ENCODE measurements at regions of chr6 and their contacts with region 1.

Region 1: DNA sequence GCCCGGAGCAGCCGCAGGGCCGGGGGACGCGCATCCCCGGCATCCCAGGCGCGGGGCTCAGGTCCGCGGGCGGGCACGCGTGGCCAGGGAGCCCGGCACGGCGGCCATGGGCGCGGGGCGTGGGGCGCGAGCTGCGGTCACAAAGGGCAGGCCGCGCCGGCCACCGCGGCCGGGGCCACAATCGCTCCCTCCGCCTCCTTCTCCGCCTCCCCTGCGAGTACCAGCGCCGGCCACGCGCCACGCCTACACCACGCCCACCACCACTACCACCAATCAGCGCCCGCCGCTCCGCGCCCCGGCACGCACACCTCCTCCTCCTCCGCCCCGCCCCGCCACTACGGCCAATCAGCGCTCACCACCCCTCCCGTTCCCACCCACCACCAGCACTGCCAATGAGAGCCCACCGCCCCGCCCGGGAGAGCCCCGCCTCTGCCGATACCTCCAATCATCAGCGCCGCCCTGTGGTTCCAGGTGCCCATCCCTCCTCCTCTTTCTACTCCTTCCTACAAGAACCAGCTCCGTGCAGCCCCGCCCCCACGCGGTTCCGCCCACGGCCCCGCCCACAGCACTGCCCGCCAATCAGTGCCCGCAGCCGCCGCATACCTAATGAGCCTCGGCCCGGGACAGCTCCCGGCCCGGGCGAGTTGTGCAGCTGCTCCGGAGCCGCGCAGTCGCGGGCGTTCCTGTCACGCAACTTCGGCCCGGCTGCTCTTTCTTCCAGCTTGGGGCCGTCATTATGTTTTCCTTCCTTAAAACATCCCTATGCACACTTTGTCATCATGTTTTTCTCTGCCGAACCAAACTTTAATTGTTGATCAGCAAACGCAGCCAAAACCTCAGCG is at the start of gene RPS6KA2:
- DNase-seq: peak; percentile 100
- H3K4me3 Mint-ChIP-seq: peak within 1 kb of the TSS; percentile 81
- H3K27ac Mint-ChIP-seq: peak within 1 kb of the TSS; percentile 59
- H3K4me1 Mint-ChIP-seq: peaks cover 23% of the 10 kb centered on the region
- H3K27me3 Mint-ChIP-seq: peaks cover 57% of the 10 kb centered on the region
- total RNA-seq, gene RPS6KA2: 2.1 and 2.2 TPM in 2 replicates

Region 2: DNA sequence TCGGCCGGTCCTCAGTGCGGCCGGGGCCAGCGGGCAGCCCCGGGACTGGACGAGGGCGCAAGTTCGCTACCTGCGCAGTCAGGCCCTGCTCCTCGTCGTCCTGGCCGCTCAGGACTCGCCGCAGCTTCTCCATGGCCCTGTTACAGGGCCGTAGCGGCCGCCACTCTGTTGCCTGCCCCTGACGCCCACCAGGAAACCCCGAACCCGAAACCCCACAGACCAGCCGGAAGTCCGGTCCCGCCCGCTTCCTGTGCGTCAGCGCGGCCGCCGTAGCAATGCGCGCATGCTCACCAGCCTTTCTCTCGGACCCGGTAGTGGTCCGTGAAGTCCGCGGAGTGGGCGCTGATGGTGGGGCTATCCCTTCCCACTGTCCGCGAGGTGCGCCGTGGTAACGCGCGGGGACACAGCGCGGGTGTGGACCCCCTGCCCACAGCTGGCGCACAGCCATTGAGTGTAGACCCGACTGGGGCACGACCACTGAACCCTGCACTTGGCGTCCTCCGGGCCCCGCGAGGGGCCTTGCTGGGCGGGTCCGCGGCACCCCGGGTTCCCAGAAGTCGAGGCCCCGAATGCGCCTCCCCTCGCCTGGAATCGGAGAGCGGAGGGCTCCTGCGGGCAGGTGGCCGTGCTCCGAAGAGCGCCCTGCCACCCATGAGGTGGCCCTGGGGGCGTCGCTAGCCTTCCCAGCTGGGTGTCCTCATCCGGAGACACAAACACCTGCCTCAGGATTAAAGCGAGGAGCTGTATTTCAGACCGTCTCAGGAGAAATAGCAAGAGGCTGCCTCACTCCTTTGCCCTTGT is 284.7 kb before region 1 on chr6 and contains the start of gene SFT2D1:
- intact Hi-C with region 1: loop called (anchors 5 kb)
- DNase-seq: peak; percentile 81
- H3K4me3 Mint-ChIP-seq: peak within 1 kb of the TSS; percentile 89
- H3K27ac Mint-ChIP-seq: peak within 1 kb of the TSS; percentile 86
- H3K4me1 Mint-ChIP-seq: peaks cover 4% of the 10 kb centered on the region
- H3K27me3 Mint-ChIP-seq: peaks cover 2% of the 10 kb centered on the region
- total RNA-seq, gene SFT2D1: 54.5 and 59.5 TPM in 2 replicates

Region 3: GRCh38 chr6:166488076-166488685 is 139.1 kb before region 1 on chr6:
- intact Hi-C with region 1: loop called (anchors 2 kb)
- DNase-seq: peak; percentile 68
- H3K4me3 Mint-ChIP-seq: peak overlapping the region; percentile 63
- H3K27ac Mint-ChIP-seq: peak overlapping the region; percentile 90
- H3K4me1 Mint-ChIP-seq: peaks cover 13% of the 10 kb centered on the region
- H3K27me3 Mint-ChIP-seq: no peaks in the 10 kb centered on the region

Region 4: DNA sequence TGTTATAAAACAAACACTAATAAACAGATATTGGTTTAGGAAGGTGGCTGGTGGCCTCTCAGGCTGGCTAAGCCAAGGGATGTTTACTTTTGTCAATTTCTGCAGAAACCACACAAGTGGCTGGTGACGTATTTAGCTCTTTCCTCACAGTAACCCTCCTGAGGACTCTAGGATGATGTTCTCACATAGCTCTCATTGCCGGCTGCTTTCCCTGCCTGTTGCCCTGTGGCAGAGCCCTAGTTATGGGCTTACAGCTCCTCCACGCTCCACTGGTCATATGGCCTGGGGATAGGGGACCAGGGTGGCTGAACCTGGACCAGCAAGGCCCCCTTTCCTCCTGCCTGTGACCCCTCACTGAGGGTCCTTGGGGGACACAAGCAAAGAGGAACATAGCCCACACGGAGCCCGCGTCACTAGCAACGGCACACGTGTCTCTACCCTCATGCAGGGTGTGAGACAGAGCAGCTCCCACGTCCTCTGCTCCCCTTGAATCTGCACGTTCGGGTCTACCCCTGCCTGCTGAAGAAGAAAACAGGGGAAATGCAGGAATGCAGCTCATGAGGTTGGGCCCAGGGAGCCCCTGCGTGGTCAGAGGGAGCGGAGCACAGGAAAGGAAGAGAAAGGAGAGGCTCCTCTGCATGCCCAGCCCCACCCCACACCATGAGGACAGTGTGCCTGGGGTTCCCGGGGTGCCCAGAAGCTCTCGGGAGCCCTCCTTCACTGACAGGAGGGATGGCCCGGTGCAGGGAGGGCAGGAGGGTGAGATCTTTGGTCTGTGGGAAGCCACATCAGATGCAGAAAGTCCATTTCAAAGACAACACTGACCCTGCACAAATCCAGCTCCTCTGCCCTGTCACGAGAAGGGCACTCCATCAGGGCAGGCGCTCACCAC is 54.6 kb before region 1 on chr6:
- intact Hi-C with region 1: no loop called
- DNase-seq: no peak
- H3K4me3 Mint-ChIP-seq: no peak overlapping the region
- H3K27ac Mint-ChIP-seq: no peak overlapping the region
- H3K4me1 Mint-ChIP-seq: no peaks in the 10 kb centered on the region
- H3K27me3 Mint-ChIP-seq: no peaks in the 10 kb centered on the region

Region 5: DNA sequence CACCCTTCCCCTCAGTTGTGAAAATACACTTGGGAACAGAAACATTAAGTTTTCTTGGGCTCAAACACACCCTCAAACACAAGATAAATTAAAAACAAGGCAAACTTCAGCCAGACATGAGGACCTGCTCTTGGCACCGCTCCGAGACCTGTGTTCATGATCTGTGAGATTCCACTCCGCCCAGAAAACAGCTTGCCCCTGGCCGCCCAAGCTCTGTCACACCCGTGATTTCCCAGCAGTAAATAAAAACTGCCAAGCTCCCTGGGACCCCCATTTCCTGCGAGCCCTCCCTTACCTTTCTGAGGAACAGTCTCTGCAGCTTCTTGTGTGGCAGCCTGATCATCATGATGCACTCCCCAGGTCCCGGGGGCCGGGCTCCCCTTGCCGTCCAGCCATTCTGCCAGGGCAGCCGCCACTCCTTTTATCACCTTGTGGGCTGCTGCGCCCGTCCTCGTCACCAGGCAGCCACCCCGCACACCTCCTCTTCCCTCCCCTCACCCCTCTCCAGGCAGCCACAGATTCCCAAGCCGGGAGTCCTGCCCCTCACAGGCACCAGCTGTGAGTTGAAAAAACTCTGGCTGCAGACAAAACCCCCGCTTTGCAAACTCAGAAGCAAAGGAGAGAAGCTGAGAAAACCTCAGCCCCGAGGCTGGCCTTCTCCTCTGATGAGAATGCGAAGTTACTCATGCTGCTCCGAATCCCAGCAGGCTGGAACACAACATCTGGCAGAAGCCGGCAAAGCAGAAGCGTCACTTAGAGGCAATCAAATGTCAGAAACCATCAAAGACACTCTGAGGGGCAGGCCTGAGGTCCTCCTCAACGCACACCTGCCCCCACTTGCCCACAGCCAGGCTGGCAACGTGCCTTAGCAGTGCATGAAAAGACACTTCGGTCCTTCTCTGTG is 130.2 kb after region 1 on chr6:
- intact Hi-C with region 1: loop called (anchors 2 kb)
- DNase-seq: no peak
- H3K4me3 Mint-ChIP-seq: no peak overlapping the region
- H3K27ac Mint-ChIP-seq: no peak overlapping the region
- H3K4me1 Mint-ChIP-seq: peaks cover 36% of the 10 kb centered on the region
- H3K27me3 Mint-ChIP-seq: peaks cover 55% of the 10 kb centered on the region

Region 6: DNA sequence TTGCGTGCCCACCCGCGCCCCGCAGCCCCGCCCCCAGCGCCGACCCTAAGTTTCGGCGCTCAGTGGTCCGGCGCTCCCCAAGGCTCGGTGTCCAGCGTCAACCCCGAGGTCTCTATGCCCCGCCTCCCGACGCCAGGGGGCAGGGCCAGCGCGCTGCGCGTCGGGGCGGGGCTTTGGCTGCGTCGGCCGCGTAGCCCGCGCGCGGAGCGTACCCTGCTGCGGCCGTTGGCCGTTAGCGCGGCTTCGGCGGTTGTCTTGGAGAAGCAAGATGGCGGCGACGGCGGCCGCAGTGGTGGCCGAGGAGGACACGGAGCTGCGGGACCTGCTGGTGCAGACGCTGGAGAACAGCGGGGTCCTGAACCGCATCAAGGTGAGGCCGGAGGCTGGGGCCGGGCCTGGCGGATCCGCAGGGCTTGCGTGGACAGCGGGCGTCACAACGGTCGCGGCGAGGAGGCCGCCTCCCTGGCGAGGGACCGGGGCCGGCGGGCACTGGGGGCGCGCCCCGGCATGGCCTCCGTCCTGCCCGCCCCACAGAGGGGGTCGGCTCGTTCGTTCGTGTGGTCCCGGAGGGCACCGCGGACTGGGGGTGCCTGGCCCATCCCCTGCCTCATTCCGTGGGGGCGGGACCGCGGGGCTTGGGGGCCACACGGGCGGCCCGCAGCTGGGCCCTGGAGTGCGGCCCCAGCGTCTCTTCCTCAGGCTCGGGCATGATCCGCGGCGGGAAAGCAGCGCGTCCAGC is 372.1 kb after region 1 on chr6 and contains the start of gene CEP43:
- intact Hi-C with region 1: loop called (anchors 1 kb)
- DNase-seq: peak; percentile 87
- H3K4me3 Mint-ChIP-seq: peak within 1 kb of the TSS; percentile 87
- H3K27ac Mint-ChIP-seq: peak within 1 kb of the TSS; percentile 80
- H3K4me1 Mint-ChIP-seq: peaks cover 35% of the 10 kb centered on the region
- H3K27me3 Mint-ChIP-seq: no peaks in the 10 kb centered on the region
- total RNA-seq, gene CEP43: 15.9 and 18.1 TPM in 2 replicates

Measured in activated T-helper 2 cell treated with anti-CD3 and anti-CD28 coated beads, Interferon-gamma antibody, Interleukin-2, Interleukin-4, amounts not matched to agents 10 μg/mL and 5 μg/mL and 100 μg/mL, durations not matched to agents 14 hours and 24 hours and 36 hours (primary cell).